Psoas muscle (tissue), 8 donors: ENCODE measurements at regions of chr1 and their contacts with region 1.

Region 1: GRCh38 chr1:167721617-167722151 is at the start of gene MPZL1:
- DNase-seq: peak; percentile 96 to 97
- ATAC-seq: peak; percentile 99
- H3K4me3 ChIP-seq: peak within 1 kb of the TSS; percentile 96
- H3K27ac ChIP-seq: peak within 1 kb of the TSS; percentile 85
- H3K4me1 ChIP-seq: peaks cover 25% of the 10 kb centered on the region
- H3K27me3 ChIP-seq: no peaks in the 10 kb centered on the region
- CTCF ChIP-seq: no peak
- total RNA-seq, gene MPZL1: 14.1 to 22.4 (median 18.3) TPM

Region 2: DNA sequence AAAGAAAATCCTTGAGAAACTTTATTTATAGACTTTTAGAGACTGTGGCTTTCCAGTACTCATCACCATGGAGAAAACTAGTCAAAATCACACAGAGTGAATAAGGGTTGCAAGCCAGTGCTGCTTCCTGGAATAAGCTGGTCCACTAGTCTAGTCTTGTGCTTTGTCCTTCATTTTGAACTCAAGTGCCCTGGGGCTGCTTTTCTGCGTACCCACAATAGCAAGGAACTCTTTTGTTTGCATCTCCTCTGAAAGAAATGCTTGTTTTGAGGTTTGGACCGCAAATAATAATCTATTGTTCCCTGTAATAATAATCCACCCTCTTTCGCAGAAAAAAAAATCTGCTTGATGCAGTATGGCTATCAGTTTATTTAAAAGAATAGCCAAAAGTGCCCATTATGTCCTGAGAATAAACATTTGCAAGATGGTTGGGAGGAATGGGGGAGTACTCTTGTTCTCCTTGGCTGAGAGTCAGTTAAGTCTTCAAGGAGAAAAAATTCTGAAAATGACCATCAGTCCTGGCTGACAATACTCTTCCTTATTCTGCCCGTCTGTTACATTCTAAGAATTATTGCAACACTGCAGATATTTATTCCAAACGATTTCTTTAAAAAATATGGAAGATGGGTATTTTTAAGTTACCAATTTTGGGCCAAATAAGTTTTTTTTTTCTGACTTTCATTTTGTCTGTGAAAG is 42.0 kb after region 1 on chr1:
- intact Hi-C with region 1: loop called in 1 of 2 experiments (anchors 5 kb)
- DNase-seq: no peak
- ATAC-seq: no peak
- H3K4me3 ChIP-seq: no peak overlapping the region
- H3K27ac ChIP-seq: no peak overlapping the region
- H3K4me1 ChIP-seq: peaks cover 7% of the 10 kb centered on the region
- H3K27me3 ChIP-seq: no peaks in the 10 kb centered on the region
- CTCF ChIP-seq: no peak

Region 3: GRCh38 chr1:167797015-167797414 is 75.3 kb after region 1 on chr1:
- intact Hi-C with region 1: loop called in 1 of 2 experiments (anchors 5 kb)
- DNase-seq: peak; percentile 75 to 83
- ATAC-seq: peak; percentile 95 to 98 (median 96)
- H3K4me3 ChIP-seq: peak overlapping the region; percentile 30
- H3K27ac ChIP-seq: peak overlapping the region; percentile 54
- H3K4me1 ChIP-seq: peaks cover 19% of the 10 kb centered on the region
- H3K27me3 ChIP-seq: no peaks in the 10 kb centered on the region
- CTCF ChIP-seq: no peak

Region 4: DNA sequence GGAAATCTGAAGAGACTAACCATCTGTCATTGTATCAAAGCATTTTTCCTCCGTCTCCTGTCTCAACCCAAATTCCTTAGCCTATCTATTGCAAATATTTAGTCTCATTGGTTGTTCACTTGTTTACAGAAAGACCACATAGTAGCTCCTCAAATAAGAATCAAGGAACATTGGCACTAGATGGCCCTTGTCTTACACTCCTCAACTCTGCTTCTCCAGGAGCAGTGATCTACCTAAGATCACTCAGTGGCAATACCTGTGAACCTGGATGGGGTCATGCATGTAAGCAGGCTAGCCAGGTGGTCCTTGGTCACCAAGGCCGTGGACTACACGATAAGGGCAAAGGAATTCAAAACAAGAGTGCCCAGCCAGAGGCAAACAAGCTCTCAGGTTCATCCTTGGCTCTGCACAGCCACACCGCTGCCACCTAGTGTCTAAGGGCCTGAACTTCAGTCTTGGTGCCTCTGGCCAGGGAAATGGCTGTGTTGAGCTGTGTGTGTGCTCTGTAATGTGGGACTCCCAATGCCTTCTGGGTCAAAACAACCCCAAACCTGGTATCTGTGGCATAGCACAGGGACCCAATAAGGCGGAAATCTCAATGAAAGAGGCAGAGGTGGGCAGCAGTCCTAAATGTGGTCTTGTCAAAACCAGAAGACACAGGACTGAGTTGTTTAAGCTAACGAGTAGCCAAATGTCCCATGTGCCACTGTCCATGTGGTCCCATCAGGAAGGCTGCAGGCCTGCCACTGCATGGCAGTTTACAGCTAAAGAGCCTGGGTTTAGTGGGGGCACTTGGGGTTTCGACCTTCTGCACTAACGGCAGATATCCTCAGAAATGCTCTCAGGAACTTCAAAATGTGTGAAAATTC is 360.6 kb after region 1 on chr1:
- intact Hi-C with region 1: loop called in 1 of 2 experiments (anchors 5 kb)
- DNase-seq: peak; percentile 59 to 83
- ATAC-seq: peak; percentile 81 to 88 (median 85)
- H3K4me3 ChIP-seq: no peak overlapping the region
- H3K27ac ChIP-seq: peak overlapping the region; percentile 44
- H3K4me1 ChIP-seq: peaks cover 12% of the 10 kb centered on the region
- H3K27me3 ChIP-seq: no peaks in the 10 kb centered on the region
- CTCF ChIP-seq: peak; percentile 86